Activated B cell treated with CpG ODN at 0.5 μM for 24 hours (primary cell): ENCODE measurements at regions of chr7 and their contacts with region 1.

Region 1: DNA sequence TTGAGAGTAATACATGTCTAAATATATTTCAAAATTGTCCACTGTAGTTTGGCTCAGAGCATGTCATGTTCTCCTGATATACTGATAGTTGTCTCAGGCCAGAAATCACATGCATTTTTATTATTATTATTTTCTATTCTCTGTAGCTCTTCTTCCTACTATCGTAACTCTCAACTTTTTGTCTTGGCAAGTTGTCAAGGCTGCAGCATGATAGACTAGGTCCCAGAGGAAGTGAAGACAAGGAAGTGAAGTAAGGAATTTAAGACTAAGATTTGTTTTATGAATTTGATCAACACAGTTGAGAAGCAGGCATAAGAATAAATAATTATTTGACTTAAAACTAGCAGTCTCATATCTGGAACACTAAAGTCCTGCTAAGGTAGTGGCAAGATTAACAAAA is 369.5 kb downstream of the ABCA13 start:
- DNase-seq: no peak
- ATAC-seq: no peak
- H3K4me3 Mint-ChIP-seq: no peak overlapping the region
- H3K27ac Mint-ChIP-seq: no peak overlapping the region
- H3K4me1 Mint-ChIP-seq: no peaks in the 10 kb centered on the region
- H3K27me3 Mint-ChIP-seq: no peaks in the 10 kb centered on the region
- CTCF ChIP-seq: no peak

Region 2: GRCh38 chr7:48389977-48390376 is 150.8 kb before region 1 on chr7:
- CTCF ChIA-PET with region 1: no interaction called
- POLR2A ChIA-PET with region 1: no interaction called
- intact Hi-C with region 1: no loop called
- DNase-seq: no peak
- ATAC-seq: no peak
- H3K4me3 Mint-ChIP-seq: no peak overlapping the region
- H3K27ac Mint-ChIP-seq: no peak overlapping the region
- H3K4me1 Mint-ChIP-seq: no peaks in the 10 kb centered on the region
- H3K27me3 Mint-ChIP-seq: no peaks in the 10 kb centered on the region
- CTCF ChIP-seq: no peak

Region 3: GRCh38 chr7:48424731-48425130 is 116.0 kb before region 1 on chr7:
- CTCF ChIA-PET with region 1: no interaction called
- POLR2A ChIA-PET with region 1: no interaction called
- intact Hi-C with region 1: no loop called
- DNase-seq: no peak
- ATAC-seq: no peak
- H3K4me3 Mint-ChIP-seq: no peak overlapping the region
- H3K27ac Mint-ChIP-seq: no peak overlapping the region
- H3K4me1 Mint-ChIP-seq: no peaks in the 10 kb centered on the region
- H3K27me3 Mint-ChIP-seq: no peaks in the 10 kb centered on the region
- CTCF ChIP-seq: no peak

Region 4: DNA sequence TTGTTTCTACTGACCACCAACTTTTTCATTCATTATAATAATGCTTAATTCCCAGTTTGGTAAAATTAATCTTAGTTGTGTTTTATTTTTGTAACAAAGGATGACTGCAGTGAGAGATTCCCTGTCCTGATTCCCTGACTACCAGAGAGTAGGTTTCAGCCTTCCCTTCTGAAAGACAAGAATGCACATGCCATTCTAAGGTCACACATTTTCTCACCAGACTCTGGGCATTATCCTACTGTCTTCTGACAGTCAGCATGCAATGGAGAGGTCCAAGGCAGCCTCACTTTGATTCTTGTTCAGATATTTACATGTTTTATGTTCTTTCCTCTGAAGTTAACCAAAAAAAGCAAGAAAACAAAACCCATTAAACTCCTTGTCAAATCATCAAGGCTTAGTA is 10.9 kb after region 1 on chr7:
- CTCF ChIA-PET with region 1: no interaction called
- POLR2A ChIA-PET with region 1: no interaction called
- intact Hi-C with region 1: loop called (anchors 1 kb)
- DNase-seq: no peak
- ATAC-seq: no peak
- H3K4me3 Mint-ChIP-seq: no peak overlapping the region
- H3K27ac Mint-ChIP-seq: no peak overlapping the region
- H3K4me1 Mint-ChIP-seq: no peaks in the 10 kb centered on the region
- H3K27me3 Mint-ChIP-seq: no peaks in the 10 kb centered on the region
- CTCF ChIP-seq: no peak